ENCODE measurements at regions of chrX and their contacts with region 1.

Region 1: GRCh38 chrX:18425199-18426003 is at the start of gene CDKL5:
- DNase-seq: peak; percentile 96
- ATAC-seq: peak; percentile 91
- H3K4me3 ChIP-seq: peak within 1 kb of the TSS; percentile 69
- H3K27ac ChIP-seq: peak within 1 kb of the TSS; percentile 96
- H3K4me1 ChIP-seq: peaks cover 3% of the 10 kb centered on the region; the same call in 1 of the 2 replicates
- H3K27me3 ChIP-seq: no peaks in the 10 kb centered on the region
- CTCF ChIP-seq: no peak
- POLR2A ChIP-seq: peak; percentile 74
- RAD21 ChIP-seq: no peak
- total RNA-seq, gene CDKL5: 8.1 and 9.7 TPM in 2 replicates

Region 2: DNA sequence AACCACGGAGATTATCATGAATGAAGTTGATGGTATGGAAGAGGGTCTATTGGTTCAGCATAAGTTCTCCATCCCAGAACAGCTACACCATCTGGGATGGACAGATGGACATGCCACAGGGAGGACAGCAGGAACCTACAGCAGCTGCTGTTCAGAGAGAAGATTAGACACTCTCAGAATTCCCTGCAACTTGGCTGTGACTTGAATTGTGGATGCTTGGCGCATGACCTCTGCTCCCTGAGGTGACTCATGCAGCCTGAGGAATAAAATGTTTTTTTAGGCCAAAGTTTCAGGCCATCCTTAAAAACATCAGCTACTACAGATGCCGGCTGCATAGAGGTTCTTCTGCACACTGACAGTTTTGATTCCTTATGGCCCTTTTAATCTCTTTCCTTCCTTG is 149.2 kb after region 1 on chrX:
- CTCF ChIA-PET with region 1: no interaction called
- POLR2A ChIA-PET with region 1: interaction called, 4 read pairs
- dilution Hi-C with region 1: no loop called
- in situ Hi-C with region 1: no loop called
- intact Hi-C with region 1: loop called (anchors 10 kb)
- DNase-seq: peak; percentile 81
- ATAC-seq: peak; percentile 79
- H3K4me3 ChIP-seq: no peak overlapping the region
- H3K27ac ChIP-seq: no peak overlapping the region
- H3K4me1 ChIP-seq: 0 out of 2 replicates have a peak, but pooled peaks cover 2% of the 10 kb centered on the region
- H3K27me3 ChIP-seq: no peaks in the 10 kb centered on the region
- CTCF ChIP-seq: no peak
- POLR2A ChIP-seq: no peak
- RAD21 ChIP-seq: no peak

Region 3: GRCh38 chrX:18617407-18617750 is 192.0 kb after region 1 on chrX:
- CTCF ChIA-PET with region 1: no interaction called
- POLR2A ChIA-PET with region 1: no interaction called
- dilution Hi-C with region 1: no loop called
- in situ Hi-C with region 1: no loop called
- intact Hi-C with region 1: loop called (anchors 1 kb)
- DNase-seq: peak; percentile 76
- ATAC-seq: peak; percentile 75
- H3K4me3 ChIP-seq: no peak overlapping the region
- H3K27ac ChIP-seq: no peak overlapping the region
- H3K4me1 ChIP-seq: peaks cover 2% of the 10 kb centered on the region
- H3K27me3 ChIP-seq: no peaks in the 10 kb centered on the region
- CTCF ChIP-seq: no peak
- POLR2A ChIP-seq: no peak
- RAD21 ChIP-seq: no peak

Region 4: GRCh38 chrX:18654875-18655836 is 229.8 kb after region 1 on chrX:
- CTCF ChIA-PET with region 1: no interaction called
- POLR2A ChIA-PET with region 1: no interaction called
- dilution Hi-C with region 1: no loop called
- in situ Hi-C with region 1: no loop called
- intact Hi-C with region 1: no loop called
- DNase-seq: no peak
- ATAC-seq: no peak
- H3K4me3 ChIP-seq: no peak overlapping the region
- H3K27ac ChIP-seq: no peak overlapping the region
- H3K4me1 ChIP-seq: peaks cover 3% of the 10 kb centered on the region; the same call in 1 of the 2 replicates
- H3K27me3 ChIP-seq: no peaks in the 10 kb centered on the region
- CTCF ChIP-seq: no peak
- POLR2A ChIP-seq: no peak
- RAD21 ChIP-seq: no peak

Region 5: DNA sequence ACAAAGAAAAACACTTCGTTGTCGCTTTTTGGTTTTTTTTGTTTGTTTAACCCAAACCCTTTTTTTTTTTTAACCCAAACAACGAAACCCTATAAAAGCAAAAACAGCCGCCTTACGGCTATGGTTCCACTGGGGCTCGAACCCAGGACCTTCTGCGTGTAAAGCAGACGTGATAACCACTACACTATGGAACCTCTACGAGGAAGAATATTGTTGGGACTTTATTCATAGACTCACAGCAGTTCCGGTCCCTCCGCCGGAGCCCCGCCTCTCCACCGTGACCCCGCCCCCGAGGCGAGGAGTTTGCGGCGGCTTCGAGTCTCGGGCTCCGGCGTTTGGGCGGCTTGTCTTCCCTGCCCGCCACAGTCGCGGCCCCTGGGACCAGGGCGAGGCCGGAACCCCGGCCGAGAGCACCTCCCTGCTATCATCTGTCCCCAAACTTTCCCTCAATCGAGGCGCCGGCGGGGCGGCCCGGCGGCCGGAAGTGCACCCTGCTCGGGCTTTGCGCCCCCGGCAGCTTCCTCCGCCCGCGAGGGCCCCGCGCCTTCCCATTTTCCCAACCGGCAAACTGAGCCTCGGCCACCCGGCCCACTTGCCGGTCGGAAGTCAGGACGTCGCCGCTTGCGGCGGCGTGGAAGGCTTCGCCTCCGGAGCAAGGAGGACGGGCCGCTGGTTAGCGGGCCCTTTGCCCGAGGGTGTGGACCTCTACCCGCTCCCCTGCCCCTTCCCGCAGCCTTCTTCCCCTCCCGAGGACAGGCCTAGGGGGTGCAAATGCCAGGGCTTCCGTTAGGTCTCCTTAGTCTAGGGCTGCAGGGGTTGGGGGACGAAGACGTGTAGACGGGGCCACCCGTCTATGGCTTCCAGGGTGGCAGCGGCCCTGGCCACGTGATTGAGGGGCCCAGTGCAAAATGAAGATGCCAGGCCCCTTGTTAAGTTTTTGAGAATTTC is 249.7 kb after region 1 on chrX:
- CTCF ChIA-PET with region 1: no interaction called
- POLR2A ChIA-PET with region 1: no interaction called
- dilution Hi-C with region 1: no loop called
- in situ Hi-C with region 1: loop called (anchors 10 kb)
- intact Hi-C with region 1: loop called (anchors 2 kb)
- DNase-seq: peak; percentile 54
- ATAC-seq: peak; percentile 90
- H3K4me3 ChIP-seq: peak overlapping the region; percentile 70
- H3K27ac ChIP-seq: peak overlapping the region; percentile 48
- H3K4me1 ChIP-seq: no peaks in the 10 kb centered on the region
- H3K27me3 ChIP-seq: no peaks in the 10 kb centered on the region
- CTCF ChIP-seq: no peak
- POLR2A ChIP-seq: no peak
- RAD21 ChIP-seq: no peak

Region 6: GRCh38 chrX:18687856-18688495 is 262.6 kb after region 1 on chrX:
- CTCF ChIA-PET with region 1: no interaction called
- POLR2A ChIA-PET with region 1: no interaction called
- dilution Hi-C with region 1: no loop called
- in situ Hi-C with region 1: loop called (anchors 10 kb)
- intact Hi-C with region 1: no loop called
- DNase-seq: no peak
- ATAC-seq: no peak
- H3K4me3 ChIP-seq: no peak overlapping the region
- H3K27ac ChIP-seq: no peak overlapping the region
- H3K4me1 ChIP-seq: no peaks in the 10 kb centered on the region
- H3K27me3 ChIP-seq: peaks cover 3% of the 10 kb centered on the region; the same call in 1 of the 2 replicates
- CTCF ChIP-seq: no peak
- POLR2A ChIP-seq: no peak
- RAD21 ChIP-seq: no peak